GM12878 (cell line): ENCODE measurements at regions of chr1 and their contacts with region 1.

Region 1: DNA sequence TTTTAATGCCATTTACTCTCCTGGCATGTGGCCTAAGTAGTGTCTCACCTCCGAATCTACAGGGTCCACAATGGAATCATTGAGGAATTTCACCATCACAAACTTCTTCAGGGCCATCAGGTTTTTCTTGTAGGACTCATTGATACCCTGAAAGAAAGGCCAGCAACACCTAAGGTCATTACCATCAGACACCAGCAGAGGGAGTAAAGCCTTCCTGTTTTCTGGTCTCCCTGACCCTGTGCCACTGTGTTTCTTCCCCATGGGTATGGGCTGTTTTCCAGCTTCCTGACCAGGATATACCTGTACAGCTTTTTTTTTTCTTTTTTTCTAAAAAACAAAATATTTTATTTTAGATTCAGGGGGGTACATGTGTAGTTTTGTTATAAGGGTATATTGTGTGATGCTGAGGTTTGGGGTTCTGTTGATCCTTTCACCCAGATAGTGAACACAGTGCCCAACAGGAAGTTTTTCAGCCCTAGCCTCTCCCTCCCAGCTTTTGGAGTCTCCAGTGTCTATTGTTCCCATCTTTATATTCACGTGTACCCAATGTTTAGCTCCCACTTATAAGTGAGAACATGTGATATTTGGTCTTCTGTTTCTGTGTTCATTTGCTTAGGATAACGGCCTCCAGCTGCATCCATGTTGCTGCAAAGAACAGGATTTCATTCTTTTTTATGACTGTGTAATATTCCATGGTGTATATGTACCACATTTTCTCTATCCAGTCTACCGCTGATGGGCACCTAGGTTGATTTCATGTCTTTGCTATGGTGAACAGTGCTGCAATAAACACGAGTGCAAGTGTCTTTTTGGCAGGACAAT is 18.3 kb downstream of the PPT1 start:
- DNase-seq: no peak
- ATAC-seq: peak; percentile 98
- H3K4me3 ChIP-seq: no peak overlapping the region
- H3K27ac ChIP-seq: no peak overlapping the region
- H3K4me1 ChIP-seq: no peaks in the 10 kb centered on the region
- H3K27me3 ChIP-seq: no peaks in the 10 kb centered on the region
- CTCF ChIP-seq: peak; percentile 74 to 85 (median 75)
- EP300 ChIP-seq: no peak
- POLR2A ChIP-seq: no peak
- RAD21 ChIP-seq: peak; percentile 63

Region 2: GRCh38 chr1:40040511-40041465 is 37.9 kb before region 1 on chr1 and contains the start of gene CAP1:
- CTCF ChIA-PET with region 1: interaction called, 19 read pairs
- POLR2A ChIA-PET with region 1: interaction called, 5 read pairs
- RAD21 ChIA-PET with region 1: interaction called, 6 read pairs
- SMC1A ChIA-PET with region 1: interaction called, 13 read pairs
- in situ Hi-C with region 1: no loop called
- intact Hi-C with region 1: no loop called
- DNase-seq: peak; percentile 91
- ATAC-seq: peak; percentile 88
- H3K4me3 ChIP-seq: peak within 1 kb of the TSS; percentile 92
- H3K27ac ChIP-seq: peak within 1 kb of the TSS; percentile 100
- H3K4me1 ChIP-seq: peaks cover 8% of the 10 kb centered on the region; the same call in 1 of the 2 replicates
- H3K27me3 ChIP-seq: no peaks in the 10 kb centered on the region
- CTCF ChIP-seq: no peak
- EP300 ChIP-seq: no peak
- POLR2A ChIP-seq: peak; percentile 81
- RAD21 ChIP-seq: no peak
- polyA plus RNA-seq, gene CAP1: 413 to 441 TPM

Region 3: GRCh38 chr1:40049725-40050124 is 29.0 kb before region 1 on chr1:
- CTCF ChIA-PET with region 1: interaction called, 8 read pairs
- POLR2A ChIA-PET with region 1: interaction called, 3 read pairs
- RAD21 ChIA-PET with region 1: interaction called, 3 read pairs
- SMC1A ChIA-PET with region 1: interaction called, 12 read pairs
- in situ Hi-C with region 1: no loop called
- intact Hi-C with region 1: no loop called
- DNase-seq: no peak
- ATAC-seq: peak; percentile 76
- H3K4me3 ChIP-seq: peak overlapping the region; percentile 30; the same call in 1 of the 2 replicates
- H3K27ac ChIP-seq: peak overlapping the region; percentile 73
- H3K4me1 ChIP-seq: peaks cover 36% of the 10 kb centered on the region
- H3K27me3 ChIP-seq: no peaks in the 10 kb centered on the region
- CTCF ChIP-seq: no peak
- EP300 ChIP-seq: no peak
- POLR2A ChIP-seq: no peak
- RAD21 ChIP-seq: no peak

Region 4: DNA sequence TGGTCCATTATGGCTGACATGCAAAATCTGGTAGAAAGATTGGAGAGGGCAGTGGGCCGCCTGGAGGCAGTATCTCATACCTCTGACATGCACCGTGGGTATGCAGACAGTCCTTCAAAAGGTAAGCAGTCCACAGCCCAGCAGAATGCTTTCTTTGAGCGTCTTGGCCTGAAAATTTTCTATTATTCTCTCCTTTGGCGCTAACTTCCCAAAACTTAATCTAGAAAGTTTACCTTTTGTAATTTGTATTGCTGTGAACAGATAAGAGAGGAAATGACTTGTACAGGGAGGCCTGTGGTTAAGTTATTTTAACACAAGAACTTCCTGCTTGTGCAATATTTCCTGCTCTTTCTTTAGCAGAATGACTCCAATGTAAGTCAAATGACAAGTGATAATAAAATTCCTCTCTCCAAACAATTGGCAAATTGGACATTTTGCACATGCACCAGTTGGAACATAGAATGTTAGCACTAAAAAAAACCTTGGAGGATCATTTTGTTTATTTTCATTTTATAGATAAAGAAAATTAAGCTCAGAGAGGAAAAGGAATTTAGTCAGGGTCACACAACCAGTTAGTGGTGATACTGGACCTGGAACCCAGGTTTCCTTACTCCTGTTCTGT is 19.3 kb before region 1 on chr1:
- CTCF ChIA-PET with region 1: interaction called, 41 read pairs
- POLR2A ChIA-PET with region 1: interaction called, 8 read pairs
- RAD21 ChIA-PET with region 1: interaction called, 4 read pairs
- SMC1A ChIA-PET with region 1: interaction called, 8 read pairs
- in situ Hi-C with region 1: no loop called
- intact Hi-C with region 1: no loop called
- DNase-seq: no peak
- ATAC-seq: peak; percentile 82
- H3K4me3 ChIP-seq: peak overlapping the region; percentile 25; the same call in 1 of the 2 replicates
- H3K27ac ChIP-seq: peak overlapping the region; percentile 84
- H3K4me1 ChIP-seq: peaks cover 47% of the 10 kb centered on the region
- H3K27me3 ChIP-seq: no peaks in the 10 kb centered on the region
- CTCF ChIP-seq: peak; percentile 10 to 15 (median 11); a peak in 2 of 6 replicates
- EP300 ChIP-seq: no peak
- POLR2A ChIP-seq: no peak
- RAD21 ChIP-seq: no peak

Region 5: GRCh38 chr1:40064797-40065499 is 13.8 kb before region 1 on chr1:
- CTCF ChIA-PET with region 1: interaction called, 41 read pairs
- POLR2A ChIA-PET with region 1: interaction called, 8 read pairs
- RAD21 ChIA-PET with region 1: interaction called, 4 read pairs
- SMC1A ChIA-PET with region 1: interaction called, 8 read pairs
- in situ Hi-C with region 1: no loop called
- intact Hi-C with region 1: no loop called
- DNase-seq: peak; percentile 55
- ATAC-seq: peak; percentile 92
- H3K4me3 ChIP-seq: 0 out of 2 replicates have a peak overlapping the region, but pooled peaks have one; percentile 7
- H3K27ac ChIP-seq: peak overlapping the region; percentile 80
- H3K4me1 ChIP-seq: peaks cover 38% of the 10 kb centered on the region
- H3K27me3 ChIP-seq: no peaks in the 10 kb centered on the region
- CTCF ChIP-seq: no peak
- EP300 ChIP-seq: 0 out of 4 replicates have a peak, but pooled peaks of 1 of the 2 experiments have one; percentile 23
- POLR2A ChIP-seq: no peak
- RAD21 ChIP-seq: no peak

Region 6: GRCh38 chr1:40096977-40097782 is 18.5 kb after region 1 on chr1 and contains the start of gene PPT1:
- CTCF ChIA-PET with region 1: interaction called, 13 read pairs
- POLR2A ChIA-PET with region 1: interaction called, 5 read pairs
- RAD21 ChIA-PET with region 1: no interaction called
- SMC1A ChIA-PET with region 1: interaction called, 3 read pairs
- in situ Hi-C with region 1: no loop called
- intact Hi-C with region 1: no loop called
- DNase-seq: peak; percentile 7
- ATAC-seq: peak; percentile 98
- H3K4me3 ChIP-seq: peak within 1 kb of the TSS; percentile 76
- H3K27ac ChIP-seq: peak within 1 kb of the TSS; percentile 3; the same call in 1 of the 2 replicates
- H3K4me1 ChIP-seq: peaks cover 4% of the 10 kb centered on the region; the same call in 1 of the 2 replicates
- H3K27me3 ChIP-seq: no peaks in the 10 kb centered on the region
- CTCF ChIP-seq: peak in 2 of 3 experiments; percentile 7 to 18; a peak in 2 of 6 replicates
- EP300 ChIP-seq: no peak
- POLR2A ChIP-seq: peak; percentile 95
- RAD21 ChIP-seq: no peak
- polyA plus RNA-seq, gene PPT1: 111 to 147 TPM